ENCODE measurements at regions of chr6 and their contacts with region 1.

Region 1: DNA sequence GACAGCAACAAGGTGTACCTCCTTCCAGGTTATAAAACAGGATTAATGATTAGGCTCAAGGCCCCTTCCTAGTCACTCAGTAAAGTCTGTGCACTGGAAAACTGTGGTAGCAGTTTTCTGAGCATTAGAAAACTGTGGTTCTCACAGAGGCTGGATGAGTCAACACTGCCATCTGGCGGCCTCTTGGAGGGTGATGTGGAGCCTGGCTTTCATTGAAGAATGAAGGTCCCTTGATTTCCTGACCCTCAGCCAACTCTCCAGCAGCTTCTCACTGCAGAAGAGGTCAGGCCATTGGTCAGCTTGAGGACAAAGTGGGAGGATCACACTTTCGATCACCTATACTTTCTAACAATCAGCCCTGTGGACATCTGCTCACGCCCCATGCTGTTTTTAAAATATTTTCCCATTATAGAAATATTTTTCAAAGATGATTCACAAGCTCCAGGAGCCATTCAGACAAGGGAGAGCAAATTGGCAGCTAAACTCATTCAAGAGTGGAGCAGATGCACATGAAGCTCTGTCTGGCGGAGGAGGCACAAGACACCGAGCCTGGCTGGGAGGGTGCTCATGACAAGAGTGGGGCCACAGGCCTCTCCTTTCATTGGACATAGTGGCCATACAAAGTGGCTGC is 23.2 kb downstream of the PSMB1 start:
- DNase-seq: peak; percentile 70
- ATAC-seq: peak; percentile 87
- H3K4me3 ChIP-seq: no peak overlapping the region
- H3K27ac ChIP-seq: no peak overlapping the region
- H3K4me1 ChIP-seq: no peaks in the 10 kb centered on the region
- H3K27me3 ChIP-seq: no peaks in the 10 kb centered on the region
- CTCF ChIP-seq: peak; percentile 83

Region 2: DNA sequence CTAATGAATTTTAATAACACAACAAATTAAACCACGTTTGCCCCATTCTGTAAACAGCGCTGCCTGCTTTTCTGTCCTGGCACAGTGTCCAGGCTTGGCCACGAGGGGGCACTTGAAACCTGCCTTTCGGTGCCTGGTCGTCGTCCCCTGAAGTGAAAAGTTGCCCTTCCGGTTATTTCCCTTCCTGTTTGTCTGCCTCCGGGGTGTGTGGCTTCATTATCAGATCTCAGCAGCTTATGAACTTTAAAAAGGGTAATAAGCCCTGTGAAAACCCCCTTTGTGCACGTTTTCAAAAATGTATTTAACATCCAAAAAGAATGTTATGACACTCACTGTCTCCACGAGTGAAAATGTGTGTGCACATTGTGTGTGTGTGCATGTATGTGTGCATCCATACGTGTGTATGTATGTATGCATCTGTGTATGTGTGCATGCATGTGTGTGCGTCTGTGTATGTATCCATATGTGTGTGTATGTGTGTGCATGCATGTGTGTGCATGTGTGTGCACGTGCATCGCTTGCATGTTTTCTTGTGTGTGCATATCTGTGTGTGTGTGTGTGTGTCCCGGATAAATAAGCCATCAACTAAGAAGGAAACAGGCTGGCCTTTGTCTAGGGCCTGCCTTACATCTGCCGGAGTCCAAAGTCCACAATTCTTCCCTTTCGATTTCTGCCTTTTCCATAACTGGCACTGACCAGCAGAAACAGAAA is 1634.7 kb before region 1 on chr6:
- CTCF ChIA-PET with region 1: no interaction called
- POLR2A ChIA-PET with region 1: no interaction called
- intact Hi-C with region 1: loop called (anchors 5 kb)
- DNase-seq: peak; percentile 77
- ATAC-seq: peak; percentile 82
- H3K4me3 ChIP-seq: 0 out of 2 replicates have a peak overlapping the region, but pooled peaks have one; percentile 32
- H3K27ac ChIP-seq: no peak overlapping the region
- H3K4me1 ChIP-seq: peaks cover 3% of the 10 kb centered on the region; the same call in 1 of the 2 replicates
- H3K27me3 ChIP-seq: 0 out of 2 replicates have a peak, but pooled peaks cover 9% of the 10 kb centered on the region
- CTCF ChIP-seq: peak; percentile 86

Region 3: DNA sequence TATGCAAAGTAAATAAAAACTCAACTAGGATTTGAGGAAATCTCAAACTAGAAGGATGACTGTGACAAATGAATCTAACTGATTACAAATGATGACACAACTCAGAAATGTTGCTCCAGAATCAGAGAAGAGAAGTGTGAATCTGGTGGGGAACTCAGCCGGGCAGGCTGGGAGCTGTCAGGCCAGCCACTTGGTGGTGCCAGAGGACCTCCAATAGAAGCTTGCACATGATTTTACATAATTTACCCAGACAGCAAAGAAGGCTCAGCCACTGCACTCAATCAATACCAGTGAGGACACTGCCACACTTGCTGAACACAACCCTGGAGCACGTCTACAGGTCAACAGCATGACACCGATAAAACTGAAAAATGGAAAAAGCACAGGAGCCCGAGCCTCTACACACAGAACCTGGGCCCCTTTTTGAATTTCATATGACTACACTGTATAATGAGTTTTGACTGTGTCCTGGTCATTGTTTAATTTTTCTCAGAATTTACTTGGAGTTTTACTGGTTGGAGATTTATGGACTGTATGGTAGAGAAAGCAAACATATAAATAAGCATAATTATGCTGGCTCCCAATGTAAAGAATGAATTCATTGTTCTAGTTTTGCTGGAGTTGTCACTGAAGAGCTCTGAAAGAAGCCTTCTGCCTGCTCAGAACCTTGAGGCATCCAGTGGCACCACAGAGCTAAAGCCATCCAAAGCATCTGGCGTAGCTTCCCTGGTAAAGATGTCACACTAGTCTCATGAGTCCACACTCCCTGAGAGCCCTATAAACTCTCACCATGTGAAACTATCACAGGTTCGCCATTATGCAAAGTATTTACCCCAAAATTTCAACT is 1572.8 kb before region 1 on chr6:
- CTCF ChIA-PET with region 1: no interaction called
- POLR2A ChIA-PET with region 1: no interaction called
- intact Hi-C with region 1: loop called (anchors 2 kb)
- DNase-seq: peak; percentile 58
- ATAC-seq: peak; percentile 80
- H3K4me3 ChIP-seq: no peak overlapping the region
- H3K27ac ChIP-seq: no peak overlapping the region
- H3K4me1 ChIP-seq: no peaks in the 10 kb centered on the region
- H3K27me3 ChIP-seq: peaks cover 10% of the 10 kb centered on the region
- CTCF ChIP-seq: peak; percentile 83

Region 4: DNA sequence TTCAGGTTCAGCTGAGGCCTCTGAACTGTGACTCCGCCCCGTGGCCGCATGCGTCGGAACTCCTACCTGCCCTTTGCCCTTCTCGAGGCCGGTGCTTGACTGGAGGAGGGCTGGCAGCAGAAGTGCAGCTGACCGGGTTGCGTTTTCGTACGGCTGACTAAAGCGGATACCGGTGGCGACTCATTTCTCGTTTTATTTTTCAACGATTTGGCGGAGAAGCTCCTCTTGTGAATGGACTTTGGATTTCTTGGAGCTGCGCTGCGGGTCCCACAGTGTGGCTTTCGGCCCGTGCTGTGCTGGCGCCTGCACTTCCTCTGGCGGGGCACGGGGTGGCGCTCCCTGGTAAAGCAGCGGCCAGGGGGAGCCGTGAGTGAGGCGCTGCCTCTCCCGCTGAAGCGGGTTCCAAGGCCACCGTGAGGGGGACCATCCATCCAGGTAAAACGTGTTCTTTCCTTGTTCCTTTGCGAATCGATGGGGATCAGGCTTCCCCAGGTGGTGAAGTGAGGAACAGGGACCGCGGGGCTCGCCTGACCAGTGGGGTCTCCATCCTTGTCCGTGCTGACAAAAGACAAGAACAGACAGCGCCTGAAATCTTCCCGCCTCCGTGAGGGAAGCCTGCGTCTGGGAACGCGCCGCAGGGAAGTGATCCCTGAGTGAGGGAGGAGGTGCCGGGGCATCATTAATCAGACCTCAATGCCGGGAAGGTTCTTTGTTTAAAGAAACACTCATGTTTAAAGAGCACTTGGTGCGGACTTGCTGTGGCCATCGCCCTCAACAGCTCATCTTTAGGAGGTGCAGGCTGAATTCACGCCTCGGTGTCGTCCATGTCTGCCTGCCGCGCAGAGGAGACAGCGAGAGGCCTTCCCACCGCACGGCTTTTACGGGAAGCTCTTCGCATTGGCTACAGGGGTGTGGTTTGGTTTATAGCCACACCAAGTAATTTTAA is 739.7 kb before region 1 on chr6:
- CTCF ChIA-PET with region 1: interaction called, 5 read pairs
- POLR2A ChIA-PET with region 1: no interaction called
- intact Hi-C with region 1: loop called (anchors 1 kb)
- DNase-seq: peak; percentile 65
- ATAC-seq: peak; percentile 96
- H3K4me3 ChIP-seq: peak overlapping the region; percentile 75
- H3K27ac ChIP-seq: no peak overlapping the region
- H3K4me1 ChIP-seq: peaks cover 14% of the 10 kb centered on the region; the same call in 1 of the 2 replicates
- H3K27me3 ChIP-seq: no peaks in the 10 kb centered on the region
- CTCF ChIP-seq: peak; percentile 89

Region 5: GRCh38 chr6:170003027-170003426 is 526.9 kb before region 1 on chr6:
- CTCF ChIA-PET with region 1: no interaction called
- POLR2A ChIA-PET with region 1: no interaction called
- intact Hi-C with region 1: no loop called
- DNase-seq: no peak
- ATAC-seq: no peak
- H3K4me3 ChIP-seq: no peak overlapping the region
- H3K27ac ChIP-seq: no peak overlapping the region
- H3K4me1 ChIP-seq: no peaks in the 10 kb centered on the region
- H3K27me3 ChIP-seq: no peaks in the 10 kb centered on the region
- CTCF ChIP-seq: 0 out of 2 replicates have a peak, but pooled peaks have one; percentile 11

Region 6: GRCh38 chr6:170371588-170371987 is 158.4 kb before region 1 on chr6:
- CTCF ChIA-PET with region 1: no interaction called
- POLR2A ChIA-PET with region 1: no interaction called
- intact Hi-C with region 1: no loop called
- DNase-seq: no peak
- ATAC-seq: no peak
- H3K4me3 ChIP-seq: no peak overlapping the region
- H3K27ac ChIP-seq: no peak overlapping the region
- H3K4me1 ChIP-seq: peaks cover 5% of the 10 kb centered on the region; the same call in 1 of the 2 replicates
- H3K27me3 ChIP-seq: no peaks in the 10 kb centered on the region
- CTCF ChIP-seq: no peak